Activated CD4-positive, alpha-beta T cell treated with anti-CD3 and anti-CD28 coated beads for 36 hours (primary cell): ENCODE measurements at regions of chr5 and their contacts with region 1.

Region 1: DNA sequence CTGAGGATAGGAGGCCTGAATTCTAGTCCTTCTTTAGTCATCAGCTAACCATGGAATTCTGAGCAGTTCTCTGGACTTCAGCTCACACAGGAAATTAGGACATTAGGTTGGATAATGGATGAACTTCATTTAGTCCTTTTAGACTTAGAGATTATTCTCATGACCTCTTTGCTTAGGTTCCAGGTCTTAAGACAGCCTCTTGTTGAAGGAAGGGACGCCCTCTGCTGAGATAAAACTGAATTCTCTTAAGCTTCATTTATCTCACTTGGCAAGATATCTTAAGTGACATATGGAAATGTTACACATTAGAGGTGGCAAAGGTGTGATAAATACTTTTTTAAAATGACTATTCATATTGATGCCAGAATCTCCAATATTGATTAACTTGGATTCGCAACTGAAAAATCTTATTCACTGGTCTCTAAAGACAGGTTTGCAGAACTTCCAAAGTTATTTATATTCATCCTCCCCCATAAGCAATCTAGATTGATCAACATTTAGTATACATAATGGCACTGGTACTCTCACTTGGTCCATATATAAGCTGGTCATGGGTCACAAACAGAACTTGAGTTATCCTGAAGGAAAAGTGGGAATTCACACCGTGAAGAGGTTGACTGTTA is 16.9 kb upstream of the ZNF366 start:
- DNase-seq: no peak
- ATAC-seq: peak; percentile 47
- H3K4me3 Mint-ChIP-seq: no peak overlapping the region
- H3K27ac Mint-ChIP-seq: no peak overlapping the region
- H3K4me1 Mint-ChIP-seq: no peaks in the 10 kb centered on the region
- H3K27me3 Mint-ChIP-seq: no peaks in the 10 kb centered on the region

Region 2: DNA sequence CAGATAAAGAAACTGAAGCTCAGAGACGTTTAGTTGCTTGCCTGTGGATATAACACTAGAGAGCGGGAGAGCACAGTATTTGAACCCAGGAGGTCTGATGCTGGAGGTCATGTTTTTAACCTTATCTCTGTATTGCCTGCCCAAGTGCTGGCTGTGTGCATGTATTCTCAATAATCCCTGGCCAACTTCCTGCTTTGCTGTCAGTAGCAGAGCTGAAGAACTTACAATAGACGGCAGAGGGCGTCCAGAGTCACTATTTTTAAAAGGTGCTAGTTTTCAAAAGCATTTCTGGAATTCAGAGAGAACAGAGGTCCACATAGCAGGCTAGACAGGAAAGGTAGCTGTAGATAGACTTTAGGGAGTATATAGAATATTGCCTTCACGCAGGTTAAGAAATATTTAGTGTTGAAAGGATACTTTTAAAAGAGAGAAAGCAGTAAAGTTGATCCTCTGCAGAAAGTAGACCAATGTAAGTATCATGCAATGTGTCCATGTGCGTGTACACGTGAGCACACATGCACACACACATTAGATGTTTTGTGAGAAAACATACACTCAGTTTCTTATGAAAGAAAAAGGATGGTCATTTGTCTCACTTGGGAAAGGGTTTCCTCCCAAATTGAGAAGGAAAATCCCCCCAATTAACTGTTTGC is 157.6 kb before region 1 on chr5:
- CTCF ChIA-PET with region 1: interaction called, 6 read pairs
- POLR2A ChIA-PET with region 1: no interaction called
- intact Hi-C with region 1: loop called (anchors 1 to 10 kb)
- DNase-seq: peak; percentile 58
- ATAC-seq: peak; percentile 73
- H3K4me3 Mint-ChIP-seq: no peak overlapping the region
- H3K27ac Mint-ChIP-seq: no peak overlapping the region
- H3K4me1 Mint-ChIP-seq: peaks cover 2% of the 10 kb centered on the region
- H3K27me3 Mint-ChIP-seq: no peaks in the 10 kb centered on the region

Region 3: DNA sequence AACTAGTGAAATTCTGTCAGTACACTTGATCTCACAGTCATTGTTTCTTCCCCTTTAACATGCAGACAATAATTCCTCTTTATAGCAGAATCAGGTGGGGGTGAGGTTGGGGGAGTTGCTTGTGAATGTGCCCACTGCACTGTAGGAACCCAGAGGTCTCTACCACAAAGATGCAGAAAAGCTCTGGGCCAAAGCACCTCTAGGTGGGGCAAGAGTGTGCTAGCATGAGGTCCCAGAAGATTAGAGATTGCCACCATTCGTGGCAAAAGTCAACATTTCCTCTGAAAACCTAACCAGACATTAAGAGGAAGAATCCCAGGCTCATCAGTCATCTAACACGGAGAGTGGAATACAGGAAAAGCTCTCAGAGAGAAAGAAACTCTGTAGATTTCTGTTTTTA is 129.4 kb before region 1 on chr5:
- CTCF ChIA-PET with region 1: no interaction called
- POLR2A ChIA-PET with region 1: no interaction called
- intact Hi-C with region 1: loop called in 1 of 2 experiments (anchors 10 kb)
- DNase-seq: peak; percentile 7
- ATAC-seq: no peak
- H3K4me3 Mint-ChIP-seq: no peak overlapping the region
- H3K27ac Mint-ChIP-seq: no peak overlapping the region
- H3K4me1 Mint-ChIP-seq: no peaks in the 10 kb centered on the region
- H3K27me3 Mint-ChIP-seq: peaks cover 22% of the 10 kb centered on the region

Region 4: GRCh38 chr5:72402959-72403628 is 121.0 kb before region 1 on chr5:
- CTCF ChIA-PET with region 1: no interaction called
- POLR2A ChIA-PET with region 1: no interaction called
- intact Hi-C with region 1: loop called (anchors 10 kb)
- DNase-seq: peak; percentile 7
- ATAC-seq: no peak
- H3K4me3 Mint-ChIP-seq: no peak overlapping the region
- H3K27ac Mint-ChIP-seq: no peak overlapping the region
- H3K4me1 Mint-ChIP-seq: no peaks in the 10 kb centered on the region
- H3K27me3 Mint-ChIP-seq: peaks cover 12% of the 10 kb centered on the region

Region 5: DNA sequence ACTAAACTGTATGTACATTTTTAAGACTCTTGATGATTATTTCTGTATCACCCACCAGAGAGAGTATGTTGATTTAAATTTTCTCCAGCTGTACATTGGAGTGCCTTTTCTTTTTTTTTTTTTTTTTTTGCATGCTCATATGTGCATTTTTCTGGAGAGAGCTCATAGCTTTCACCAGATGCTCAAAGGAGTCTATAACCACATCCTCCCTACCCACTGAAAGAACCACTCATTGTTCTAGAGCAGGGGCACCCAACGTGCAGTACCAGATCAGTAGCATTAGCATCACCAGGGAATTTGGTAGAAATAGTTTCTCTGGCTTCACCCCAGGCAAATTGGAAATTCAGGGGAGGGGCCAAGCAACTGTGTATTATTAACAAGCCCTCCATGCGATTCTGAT is 542.4 kb after region 1 on chr5:
- CTCF ChIA-PET with region 1: no interaction called
- POLR2A ChIA-PET with region 1: no interaction called
- intact Hi-C with region 1: no loop called
- DNase-seq: no peak
- ATAC-seq: no peak
- H3K4me3 Mint-ChIP-seq: no peak overlapping the region
- H3K27ac Mint-ChIP-seq: no peak overlapping the region
- H3K4me1 Mint-ChIP-seq: no peaks in the 10 kb centered on the region
- H3K27me3 Mint-ChIP-seq: peaks cover 6% of the 10 kb centered on the region